Cardiac septum (tissue), 1 donor: ENCODE measurements at regions of chr1 and their contacts with region 1.

Region 1: DNA sequence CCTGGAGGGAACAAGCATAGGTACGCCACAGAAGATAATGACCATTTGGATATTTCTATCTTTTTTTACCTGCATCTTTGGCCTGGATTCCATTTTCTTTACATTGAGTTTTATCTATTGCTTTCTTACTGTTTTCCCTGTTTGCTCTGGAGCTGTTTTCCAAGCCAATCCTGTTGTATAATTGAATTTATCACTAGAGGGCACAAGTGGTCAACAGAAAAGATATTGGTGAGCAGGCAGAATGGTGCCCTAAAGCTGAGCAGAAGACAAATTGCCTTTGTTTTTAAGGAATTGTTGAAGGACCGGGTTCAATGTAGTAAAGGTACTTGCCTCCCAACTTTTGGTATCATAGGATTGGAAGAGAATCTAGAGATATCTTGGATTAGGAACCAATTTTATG is 152.8 kb downstream of the PPP1R12B start:
- DNase-seq: no peak

Region 2: DNA sequence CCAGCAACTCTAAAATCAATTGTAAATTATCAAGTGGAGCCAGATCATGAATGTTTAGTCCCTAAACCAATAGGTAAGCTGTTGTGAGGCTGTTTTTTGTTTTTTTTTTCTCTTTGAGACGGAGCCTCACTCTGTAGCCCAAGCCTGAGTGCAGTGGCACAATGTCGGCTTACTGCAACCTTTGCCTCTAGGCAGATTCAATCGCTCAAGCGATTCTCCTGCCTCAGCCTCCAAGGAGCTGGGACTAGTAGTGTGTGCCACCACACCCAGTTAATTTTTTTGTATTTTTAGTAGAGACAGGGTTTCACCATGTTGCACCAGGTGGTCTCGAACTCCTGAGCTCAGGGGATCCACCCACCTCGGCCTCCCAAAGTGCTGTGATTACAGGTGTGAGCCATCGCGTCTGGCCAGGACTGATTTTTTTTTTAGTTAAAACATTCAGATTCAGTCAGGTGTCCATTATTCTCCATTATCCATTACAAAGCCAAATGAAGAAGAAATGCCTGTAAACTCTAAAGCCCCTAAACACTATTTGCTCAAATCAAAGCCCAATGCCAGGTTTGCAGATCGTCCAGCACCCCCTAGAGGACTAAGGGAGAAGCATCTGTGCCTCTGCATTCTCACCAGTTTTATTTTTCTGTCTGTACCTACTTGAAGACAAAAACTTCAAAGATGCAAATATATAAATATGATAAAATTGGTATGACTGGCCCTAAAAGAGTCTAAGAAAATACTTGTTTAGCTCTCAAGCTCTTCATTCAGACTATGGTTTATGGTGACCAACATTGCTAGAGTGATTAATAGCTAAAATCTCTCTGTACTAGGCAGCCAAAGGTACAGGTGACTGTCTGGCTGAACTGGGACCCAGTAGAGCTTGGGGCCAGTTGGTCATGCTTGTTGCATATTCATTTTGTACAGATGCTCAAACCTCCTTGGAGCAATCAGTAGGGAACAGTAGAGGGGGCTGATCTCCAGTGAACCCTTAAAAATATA is 70.4 kb after region 1 on chr1:
- intact Hi-C with region 1: loop called (anchors 5 kb)
- DNase-seq: no peak

Region 3: GRCh38 chr1:202599677-202600431 is 98.6 kb after region 1 on chr1:
- intact Hi-C with region 1: loop called (anchors 5 kb)
- DNase-seq: no peak

Region 4: DNA sequence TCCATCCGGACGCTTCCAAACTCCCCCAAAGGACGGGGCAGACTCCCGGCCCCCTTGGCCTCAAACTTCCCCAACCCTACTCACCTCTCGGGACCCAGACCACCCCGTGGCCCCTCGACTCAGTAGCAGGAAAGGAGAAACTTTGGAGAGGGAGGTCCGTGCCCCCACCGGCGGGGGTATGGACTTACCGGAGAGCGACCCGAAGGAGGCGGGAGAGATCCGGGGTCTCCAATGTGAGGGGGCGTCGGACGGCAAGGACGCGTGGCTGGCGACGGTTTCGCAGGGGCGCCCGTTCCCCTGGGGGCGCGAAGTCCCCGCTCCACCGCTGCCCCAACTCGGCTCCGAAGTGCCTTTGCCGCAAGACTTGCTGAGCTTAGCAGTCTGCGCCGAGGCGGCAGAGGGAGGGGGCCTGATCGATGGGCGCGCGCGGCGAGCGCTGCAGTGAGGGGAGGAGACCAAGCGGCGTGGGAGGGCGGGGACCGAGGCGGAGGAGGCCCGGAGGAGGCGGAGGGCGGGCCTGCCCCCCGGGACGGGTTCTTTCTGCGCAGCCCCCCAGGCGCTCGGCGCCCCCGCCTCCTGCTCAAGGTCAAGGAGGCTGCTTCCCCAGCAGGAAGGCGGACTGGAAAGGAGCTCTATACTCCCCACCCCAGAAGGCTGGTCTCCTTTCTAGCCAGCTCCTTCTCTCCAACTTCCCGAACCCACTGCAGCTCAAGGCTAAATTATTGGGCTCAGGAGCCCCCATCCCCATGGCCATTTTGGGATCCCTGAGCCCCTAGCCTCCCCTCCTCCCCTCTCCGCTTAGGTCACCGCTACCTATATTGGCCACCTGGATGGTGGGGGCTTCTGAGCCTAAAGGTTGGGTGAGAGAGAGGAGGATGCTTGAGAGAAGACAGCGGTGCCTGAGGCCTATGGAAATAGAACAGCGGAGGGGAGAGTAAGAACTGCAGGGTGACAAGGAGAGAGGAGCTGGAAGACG is 209.1 kb after region 1 on chr1 and contains the start of gene SYT2:
- intact Hi-C with region 1: loop called (anchors 10 kb)
- DNase-seq: no peak
- total RNA-seq, gene SYT2: not detected

Region 5: DNA sequence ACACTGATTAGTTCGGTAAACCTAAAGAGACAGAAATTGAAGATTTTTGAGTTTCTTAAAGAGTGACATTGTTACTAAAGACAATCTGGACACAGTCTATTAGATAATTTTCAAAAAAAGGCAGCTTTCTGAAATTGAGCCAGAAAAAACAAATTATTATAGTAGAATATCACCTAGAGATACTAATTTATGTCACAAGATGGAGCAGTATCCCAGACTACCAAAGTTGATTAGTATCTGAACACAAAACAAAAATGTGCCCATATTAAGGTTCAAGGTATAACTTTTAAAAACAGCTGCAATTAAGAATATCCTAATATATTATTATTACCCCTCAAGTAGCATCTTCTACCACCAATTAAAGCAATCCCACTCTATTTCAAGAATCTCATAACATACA is 249.5 kb after region 1 on chr1:
- intact Hi-C with region 1: no loop called
- DNase-seq: no peak